HepG2 (cell line): ENCODE measurements at regions of chr12 and their contacts with region 1.

Region 1: DNA sequence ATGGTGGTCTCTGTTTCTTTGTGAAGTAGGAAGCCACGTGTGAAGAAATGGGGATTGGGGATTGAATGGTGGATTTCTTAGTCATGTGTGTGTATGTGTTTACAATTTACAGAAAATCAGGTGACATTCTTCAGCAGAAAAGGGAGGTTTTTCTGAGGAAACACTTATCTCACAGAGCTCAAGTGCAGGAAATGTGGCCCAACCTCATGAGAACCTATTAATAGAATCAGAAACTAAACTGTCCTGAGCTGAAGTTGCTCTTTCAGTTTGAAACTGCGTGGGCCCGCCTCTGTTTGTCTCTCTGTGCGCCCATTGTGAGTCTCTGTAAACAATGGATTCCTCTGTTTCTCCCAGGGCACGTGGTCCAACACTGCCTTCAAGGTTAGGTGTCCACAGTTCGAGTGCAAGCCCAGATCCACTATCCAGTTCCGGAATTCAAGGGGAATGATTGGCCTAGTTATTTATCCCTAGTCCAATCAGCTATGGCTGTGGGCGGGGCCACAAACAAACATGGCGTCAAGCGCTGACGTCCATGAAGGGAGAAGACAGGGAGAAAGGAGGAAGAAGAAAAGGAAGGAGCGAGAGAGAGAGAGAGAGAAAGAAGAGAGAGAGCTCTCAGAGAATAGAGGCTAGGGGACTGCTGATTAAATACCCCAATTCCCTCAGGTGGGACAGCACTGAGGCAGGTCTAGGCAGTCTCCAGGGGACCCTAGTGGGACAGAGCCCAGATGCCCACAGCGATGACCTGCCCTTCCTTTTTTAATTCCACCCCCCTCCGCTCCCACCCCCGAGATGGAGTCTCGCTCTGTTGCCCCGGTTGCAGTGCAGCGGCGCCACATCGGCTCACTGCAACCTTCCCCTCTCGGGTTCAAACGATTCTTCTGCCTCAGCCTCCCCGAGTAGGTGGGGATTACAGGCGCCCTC is 31.4 kb upstream of the C12orf76 start:
- DNase-seq: peak; percentile 96
- ATAC-seq: peak; percentile 96
- H3K4me3 ChIP-seq: peak overlapping the region in 1 of 3 experiments; percentile 41; a peak in 1 of 6 replicates
- H3K27ac ChIP-seq: peak overlapping the region; percentile 83
- H3K4me1 ChIP-seq: peaks cover 49% of the 10 kb centered on the region
- H3K27me3 ChIP-seq: no peaks in the 10 kb centered on the region
- CTCF ChIP-seq: no peak
- EP300 ChIP-seq: peak in 1 of 2 experiments; percentile 69; a peak in 2 of 4 replicates
- POLR2A ChIP-seq: no peak; a peak in 1 of 4 replicates
- RAD21 ChIP-seq: no peak; the same call in 1 of the 2 replicates

Region 2: GRCh38 chr12:110048242-110049027 is 31.3 kb before region 1 on chr12 and contains the start of gene C12orf76:
- CTCF ChIA-PET with region 1: no interaction called
- POLR2A ChIA-PET with region 1: interaction called, 12 read pairs
- in situ Hi-C with region 1: no loop called
- intact Hi-C with region 1: loop called (anchors 2 kb)
- DNase-seq: peak; percentile 93
- ATAC-seq: peak; percentile 99
- H3K4me3 ChIP-seq: peak within 1 kb of the TSS; percentile 73 to 90 (median 89)
- H3K27ac ChIP-seq: peak within 1 kb of the TSS; percentile 77
- H3K4me1 ChIP-seq: peaks cover 39% of the 10 kb centered on the region
- H3K27me3 ChIP-seq: no peaks in the 10 kb centered on the region
- CTCF ChIP-seq: peak; percentile 75
- EP300 ChIP-seq: peak; percentile 29 to 60; a peak in 1 of 4 replicates
- POLR2A ChIP-seq: peak; percentile 89 to 94
- RAD21 ChIP-seq: peak; percentile 60; the same call in 1 of the 2 replicates
- total RNA-seq, gene C12orf76: 15.8 and 16.9 TPM in 2 replicates

Region 3: DNA sequence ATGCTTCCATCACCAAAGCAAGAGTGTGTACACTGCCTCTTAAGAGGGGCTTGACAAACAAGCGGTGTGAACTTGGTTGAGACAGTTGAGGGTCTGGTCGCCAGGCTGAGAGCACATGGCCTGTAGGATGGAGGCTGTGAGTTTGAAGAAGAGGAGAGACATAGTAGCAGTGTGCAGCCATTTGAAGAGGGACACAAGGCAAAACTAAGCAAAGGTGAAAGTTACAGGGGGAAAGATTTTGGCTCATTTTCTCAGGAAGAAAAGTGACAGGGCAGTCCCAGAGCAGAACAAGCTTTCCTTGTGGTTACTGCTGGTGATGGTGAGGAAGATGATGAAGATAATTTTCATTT is 20.1 kb before region 1 on chr12:
- CTCF ChIA-PET with region 1: no interaction called
- POLR2A ChIA-PET with region 1: interaction called, 16 read pairs
- in situ Hi-C with region 1: no loop called
- intact Hi-C with region 1: no loop called
- DNase-seq: no peak
- ATAC-seq: no peak
- H3K4me3 ChIP-seq: no peak overlapping the region
- H3K27ac ChIP-seq: no peak overlapping the region
- H3K4me1 ChIP-seq: peaks cover 40% of the 10 kb centered on the region
- H3K27me3 ChIP-seq: 0 out of 5 replicates have a peak, but pooled peaks cover 0 to 3% of the 10 kb centered on the region in 2 experiments
- CTCF ChIP-seq: no peak
- EP300 ChIP-seq: no peak
- POLR2A ChIP-seq: no peak
- RAD21 ChIP-seq: no peak

Region 4: GRCh38 chr12:110270125-110270962 is 190.6 kb after region 1 on chr12:
- CTCF ChIA-PET with region 1: no interaction called
- POLR2A ChIA-PET with region 1: no interaction called
- in situ Hi-C with region 1: no loop called
- intact Hi-C with region 1: no loop called
- DNase-seq: peak; percentile 95
- ATAC-seq: peak; percentile 95
- H3K4me3 ChIP-seq: peak overlapping the region; percentile 11 to 63 (median 35); a peak in 5 of 6 replicates
- H3K27ac ChIP-seq: peak overlapping the region; percentile 52
- H3K4me1 ChIP-seq: peaks cover 59% of the 10 kb centered on the region
- H3K27me3 ChIP-seq: no peaks in the 10 kb centered on the region
- CTCF ChIP-seq: no peak
- EP300 ChIP-seq: peak in 1 of 2 experiments; percentile 26; a peak in 1 of 4 replicates
- POLR2A ChIP-seq: no peak
- RAD21 ChIP-seq: no peak